Natural killer cell (primary cell): ENCODE measurements at regions of chr14 and their contacts with region 1.

Region 1: DNA sequence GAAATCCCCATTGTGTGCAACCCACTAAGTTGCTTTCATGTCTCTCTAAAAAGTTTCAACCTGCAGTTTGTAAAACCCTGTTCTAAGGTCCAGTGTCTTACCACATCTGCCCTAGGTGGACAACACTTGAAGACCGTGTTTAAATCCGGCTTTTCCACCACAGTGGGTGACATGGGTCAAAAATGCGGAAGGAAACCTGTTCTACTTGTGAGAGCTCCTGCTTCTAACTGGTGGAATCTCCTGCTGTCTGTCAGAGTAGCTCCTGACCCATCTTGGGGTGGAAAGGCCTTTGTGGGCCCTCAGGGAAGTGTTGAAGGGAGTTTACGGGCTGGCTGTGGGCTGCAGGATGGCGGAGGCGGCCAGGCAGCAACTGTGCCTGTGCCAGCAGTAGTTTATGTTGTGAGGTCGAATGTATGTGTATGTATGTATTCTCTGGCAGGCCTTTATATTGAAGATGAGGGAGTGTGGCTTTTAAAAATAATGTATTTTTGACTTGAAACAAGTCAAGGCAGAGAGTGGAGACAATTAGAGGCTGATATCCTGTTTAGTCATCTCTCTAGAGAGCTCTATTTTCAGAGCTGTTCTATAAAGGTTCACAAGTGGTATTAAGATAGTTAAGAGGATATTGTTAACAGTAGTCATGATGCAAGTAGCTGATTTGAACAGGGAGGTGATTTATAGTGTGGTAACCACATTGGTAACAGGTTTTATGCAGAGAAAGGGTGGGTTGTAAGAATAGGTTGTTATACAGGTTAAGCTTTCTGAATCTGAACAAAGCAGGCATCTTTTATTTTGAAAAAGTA is 67.0 kb downstream of the PRKCH start:
- DNase-seq: peak; percentile 58 to 69
- ATAC-seq: peak; percentile 60 to 88 (median 79)
- H3K4me3 ChIP-seq: no peak overlapping the region
- H3K4me3 Mint-ChIP-seq: no peak overlapping the region
- H3K27ac ChIP-seq: peak overlapping the region; percentile 98
- H3K27ac Mint-ChIP-seq: no peak overlapping the region
- H3K4me1 ChIP-seq: peaks cover 70% of the 10 kb centered on the region
- H3K4me1 Mint-ChIP-seq: peaks cover 0 to 15% of the 10 kb centered on the region in 2 donors
- H3K27me3 ChIP-seq: no peaks in the 10 kb centered on the region
- H3K27me3 Mint-ChIP-seq: no peaks in the 10 kb centered on the region
- CTCF ChIP-seq: no peak

Region 2: GRCh38 chr14:61321385-61322010 is 66.9 kb before region 1 on chr14 and contains the start of gene PRKCH:
- intact Hi-C with region 1: loop called (anchors 2 kb)
- DNase-seq: peak; percentile 78 to 92
- ATAC-seq: peak; percentile 76 to 85 (median 84)
- H3K4me3 ChIP-seq: peak within 1 kb of the TSS; percentile 76
- H3K4me3 Mint-ChIP-seq: peak within 1 kb of the TSS; percentile 96
- H3K27ac ChIP-seq: peak within 1 kb of the TSS; percentile 83
- H3K27ac Mint-ChIP-seq: peak within 1 kb of the TSS in 1 of 2 donors; percentile 99
- H3K4me1 ChIP-seq: peaks cover 13% of the 10 kb centered on the region
- H3K4me1 Mint-ChIP-seq: peaks cover 36 to 40% of the 10 kb centered on the region in 2 donors
- H3K27me3 ChIP-seq: no peaks in the 10 kb centered on the region
- H3K27me3 Mint-ChIP-seq: no peaks in the 10 kb centered on the region
- CTCF ChIP-seq: peak; percentile 9
- total RNA-seq, gene PRKCH: 610 to 756 (median 618) TPM

Region 3: DNA sequence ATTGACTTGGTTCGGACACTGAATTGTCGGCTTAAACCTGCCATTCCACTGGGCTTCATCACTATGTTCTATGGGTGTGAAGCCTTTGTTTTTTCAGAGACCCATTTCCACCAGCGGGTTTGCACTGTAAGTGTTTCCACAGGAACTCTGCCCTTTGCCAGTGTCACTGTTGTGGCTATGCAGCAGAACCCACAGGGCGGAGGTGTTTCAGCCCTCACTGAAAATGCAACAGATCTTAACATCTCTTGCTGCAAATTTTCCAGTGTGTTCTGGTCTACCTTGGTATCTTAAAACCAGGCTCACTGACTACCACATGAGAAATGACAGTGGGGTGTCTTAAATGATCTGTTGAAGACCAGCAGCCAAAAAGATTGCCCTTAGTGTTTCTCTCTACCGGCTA is 45.9 kb before region 1 on chr14:
- intact Hi-C with region 1: loop called (anchors 1 kb)
- DNase-seq: peak; percentile 80 to 92
- ATAC-seq: peak; percentile 56 to 87 (median 83)
- H3K4me3 ChIP-seq: peak overlapping the region; percentile 7
- H3K4me3 Mint-ChIP-seq: peak overlapping the region; percentile 92
- H3K27ac ChIP-seq: peak overlapping the region; percentile 90
- H3K27ac Mint-ChIP-seq: peak overlapping the region in 1 of 2 donors; percentile 99
- H3K4me1 ChIP-seq: peaks cover 82% of the 10 kb centered on the region
- H3K4me1 Mint-ChIP-seq: peaks cover 96% of the 10 kb centered on the region in 2 donors
- H3K27me3 ChIP-seq: no peaks in the 10 kb centered on the region
- H3K27me3 Mint-ChIP-seq: no peaks in the 10 kb centered on the region
- CTCF ChIP-seq: no peak

Region 4: GRCh38 chr14:61368114-61368726 is 20.2 kb before region 1 on chr14:
- intact Hi-C with region 1: loop called (anchors 2 kb)
- DNase-seq: no peak
- ATAC-seq: no peak
- H3K4me3 ChIP-seq: no peak overlapping the region
- H3K4me3 Mint-ChIP-seq: no peak overlapping the region
- H3K27ac ChIP-seq: peak overlapping the region; percentile 58
- H3K27ac Mint-ChIP-seq: no peak overlapping the region
- H3K4me1 ChIP-seq: peaks cover 64% of the 10 kb centered on the region
- H3K4me1 Mint-ChIP-seq: peaks cover 22 to 30% of the 10 kb centered on the region in 2 donors
- H3K27me3 ChIP-seq: no peaks in the 10 kb centered on the region
- H3K27me3 Mint-ChIP-seq: no peaks in the 10 kb centered on the region
- CTCF ChIP-seq: no peak

Region 5: GRCh38 chr14:61403411-61403810 is 15.0 kb after region 1 on chr14:
- intact Hi-C with region 1: loop called (anchors 2 kb)
- DNase-seq: peak in 1 of 2 donors; percentile 76
- ATAC-seq: peak; percentile 68 to 83 (median 83)
- H3K4me3 ChIP-seq: no peak overlapping the region
- H3K4me3 Mint-ChIP-seq: peak overlapping the region; percentile 71
- H3K27ac ChIP-seq: peak overlapping the region; percentile 75
- H3K27ac Mint-ChIP-seq: no peak overlapping the region
- H3K4me1 ChIP-seq: peaks cover 58% of the 10 kb centered on the region
- H3K4me1 Mint-ChIP-seq: peaks cover 88 to 91% of the 10 kb centered on the region in 2 donors
- H3K27me3 ChIP-seq: no peaks in the 10 kb centered on the region
- H3K27me3 Mint-ChIP-seq: no peaks in the 10 kb centered on the region
- CTCF ChIP-seq: no peak

Region 6: GRCh38 chr14:61444215-61444768 is 55.9 kb after region 1 on chr14:
- intact Hi-C with region 1: loop called (anchors 2 kb)
- DNase-seq: peak; percentile 64 to 85
- ATAC-seq: peak; percentile 87 to 92 (median 87)
- H3K4me3 ChIP-seq: no peak overlapping the region
- H3K4me3 Mint-ChIP-seq: peak overlapping the region; percentile 82
- H3K27ac ChIP-seq: peak overlapping the region; percentile 70
- H3K27ac Mint-ChIP-seq: no peak overlapping the region
- H3K4me1 ChIP-seq: peaks cover 65% of the 10 kb centered on the region
- H3K4me1 Mint-ChIP-seq: peaks cover 94 to 96% of the 10 kb centered on the region in 2 donors
- H3K27me3 ChIP-seq: no peaks in the 10 kb centered on the region
- H3K27me3 Mint-ChIP-seq: no peaks in the 10 kb centered on the region
- CTCF ChIP-seq: no peak

Region 7: DNA sequence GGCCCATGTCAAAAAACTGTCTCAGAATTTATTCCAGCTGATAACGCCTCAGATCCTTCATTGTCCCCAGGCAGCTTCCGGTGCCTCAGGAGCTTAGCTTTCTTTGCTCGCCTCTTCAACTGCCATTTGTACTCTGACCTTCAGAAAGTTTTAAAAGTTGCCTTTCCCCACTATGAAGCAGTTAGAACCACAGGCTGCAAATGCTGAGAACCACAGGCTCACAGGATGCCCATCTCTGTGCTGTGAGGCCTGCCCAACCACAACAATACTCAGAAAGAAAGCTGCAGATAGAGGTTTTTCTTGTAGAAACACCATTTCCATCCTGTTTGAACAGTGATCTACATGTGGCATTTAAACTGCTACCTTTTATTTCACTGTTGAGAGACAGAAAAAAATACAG is 64.1 kb after region 1 on chr14:
- intact Hi-C with region 1: loop called (anchors 2 kb)
- DNase-seq: peak; percentile 44 to 78
- ATAC-seq: peak; percentile 77 to 90 (median 84)
- H3K4me3 ChIP-seq: no peak overlapping the region
- H3K4me3 Mint-ChIP-seq: peak overlapping the region; percentile 86
- H3K27ac ChIP-seq: peak overlapping the region; percentile 82
- H3K27ac Mint-ChIP-seq: peak overlapping the region in 1 of 2 donors; percentile 93
- H3K4me1 ChIP-seq: peaks cover 67% of the 10 kb centered on the region
- H3K4me1 Mint-ChIP-seq: peaks cover 97% of the 10 kb centered on the region in 2 donors
- H3K27me3 ChIP-seq: no peaks in the 10 kb centered on the region
- H3K27me3 Mint-ChIP-seq: no peaks in the 10 kb centered on the region
- CTCF ChIP-seq: no peak